Right ventricle myocardium superior (tissue), 1 donor: ENCODE measurements at regions of chr3 and their contacts with region 1.

Region 1: DNA sequence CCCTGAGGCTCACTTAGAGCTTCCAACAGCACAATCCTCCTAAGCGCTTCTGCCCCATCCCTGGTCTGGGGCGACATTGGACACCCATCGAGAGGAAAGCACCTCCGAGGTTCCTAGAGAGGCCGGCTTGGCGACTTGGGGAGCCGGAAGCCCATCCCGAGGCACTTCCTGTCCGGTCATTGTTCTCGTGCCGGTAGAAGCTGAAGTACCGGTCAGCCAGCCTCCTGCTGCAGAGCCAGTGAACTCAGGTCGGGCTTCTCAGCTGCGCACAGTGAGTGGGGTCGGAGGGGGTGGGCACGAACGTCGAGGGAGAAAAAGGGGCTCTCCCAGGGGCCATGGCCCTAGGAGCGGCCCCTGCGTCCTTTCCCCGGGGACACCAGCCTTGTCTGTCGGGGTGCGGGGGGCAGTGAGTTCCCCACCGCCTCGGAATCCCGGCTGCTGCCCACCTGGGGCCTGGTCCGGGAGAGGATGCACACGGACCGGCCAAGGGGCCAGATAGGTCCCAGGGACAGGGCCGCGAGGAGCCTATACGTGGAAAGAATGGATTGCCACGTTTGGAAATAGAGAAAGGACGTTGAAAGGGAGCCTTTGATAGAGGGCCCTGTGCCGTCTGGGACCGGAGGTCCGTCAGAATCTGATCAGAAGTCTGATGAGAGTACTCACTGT is at the start of gene ZNF35:
- DNase-seq: peak; percentile 86
- ATAC-seq: peak; percentile 95
- total RNA-seq, gene ZNF35: 6.3 TPM

Region 2: DNA sequence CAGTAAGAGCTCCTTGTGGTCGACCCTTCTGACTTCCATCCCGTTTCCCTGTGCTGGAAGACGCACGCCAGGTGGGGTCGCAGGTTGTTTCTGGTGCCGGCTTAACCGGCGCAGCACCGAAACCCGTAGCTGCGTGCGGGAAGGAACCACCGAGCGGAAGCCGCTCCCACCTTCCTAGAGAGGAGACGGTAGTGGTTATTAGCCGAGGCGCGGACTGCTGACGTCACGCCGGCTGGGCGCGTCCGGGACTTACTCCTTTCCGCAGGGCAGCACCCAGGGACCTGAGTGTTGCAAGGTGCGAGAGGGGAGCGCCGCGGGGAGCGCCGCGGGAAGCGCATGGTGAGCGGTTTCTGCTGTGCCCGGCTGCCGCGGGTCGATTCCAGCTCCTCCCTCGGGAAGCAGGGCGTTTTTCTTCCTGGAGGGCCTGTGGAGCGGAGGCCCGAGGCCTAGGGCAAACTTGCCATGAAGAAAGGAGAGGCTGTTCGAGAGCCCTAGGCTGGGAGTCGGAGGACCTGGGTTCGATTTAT is 80.8 kb after region 1 on chr3 and contains the start of gene ZNF501:
- intact Hi-C with region 1: loop called (anchors 10 kb)
- DNase-seq: peak; percentile 98
- ATAC-seq: peak; percentile 100
- total RNA-seq, gene ZNF501: 4.9 TPM